PC-9 (cell line): ENCODE measurements at regions of chr6 and their contacts with region 1.

Region 1: GRCh38 chr6:70413114-70413991 is at the start of gene FAM135A:
- DNase-seq: peak; percentile 91 to 99
- H3K4me3 ChIP-seq: peak within 1 kb of the TSS; percentile 76
- H3K27ac ChIP-seq: peak within 1 kb of the TSS; percentile 43
- H3K4me1 ChIP-seq: peaks cover 31% of the 10 kb centered on the region
- H3K27me3 ChIP-seq: no peaks in the 10 kb centered on the region
- CTCF ChIP-seq: no peak
- total RNA-seq, gene FAM135A: 16.0 and 16.7 TPM in 2 replicates

Region 2: DNA sequence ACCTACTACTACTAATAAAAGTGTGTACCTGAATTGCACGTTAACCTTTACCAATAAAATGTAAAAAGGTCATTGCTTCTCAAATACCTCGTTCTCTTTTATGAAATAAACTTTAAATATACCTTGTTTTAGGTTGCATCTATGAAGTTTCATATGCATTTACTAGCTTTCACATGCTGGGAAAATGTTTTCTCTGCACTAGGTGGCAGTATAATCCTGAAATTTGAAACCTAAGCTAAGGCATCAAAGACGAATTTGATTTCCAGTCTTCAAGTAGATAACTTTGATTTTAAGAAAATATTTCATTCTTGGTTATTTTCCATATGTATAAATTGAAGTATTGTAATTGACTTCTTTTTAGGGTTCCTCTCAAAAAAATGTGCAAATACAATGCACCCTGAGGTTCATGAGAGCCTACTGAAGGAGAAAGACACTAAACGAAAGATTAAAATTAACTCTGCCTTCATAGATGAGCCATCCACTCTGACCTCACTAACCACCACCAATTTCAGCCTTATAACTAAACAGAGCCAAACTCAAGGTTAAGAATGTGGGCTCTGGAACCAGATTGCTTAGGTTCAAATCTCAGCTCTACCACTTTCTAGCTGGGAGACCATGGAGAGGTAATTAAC is 103.2 kb before region 1 on chr6:
- CTCF ChIA-PET with region 1: interaction called, 3 read pairs
- POLR2A ChIA-PET with region 1: no interaction called
- intact Hi-C with region 1: loop called (anchors 5 kb)
- DNase-seq: peak in 1 of 2 experiments; percentile 48
- H3K4me3 ChIP-seq: no peak overlapping the region
- H3K27ac ChIP-seq: no peak overlapping the region
- H3K4me1 ChIP-seq: no peaks in the 10 kb centered on the region
- H3K27me3 ChIP-seq: peaks cover 49% of the 10 kb centered on the region
- CTCF ChIP-seq: peak; percentile 78

Region 3: GRCh38 chr6:70375882-70376281 is 37.5 kb before region 1 on chr6:
- CTCF ChIA-PET with region 1: interaction called, 9 read pairs
- POLR2A ChIA-PET with region 1: no interaction called
- intact Hi-C with region 1: loop called (anchors 5 kb)
- DNase-seq: no peak
- H3K4me3 ChIP-seq: no peak overlapping the region
- H3K27ac ChIP-seq: no peak overlapping the region
- H3K4me1 ChIP-seq: peaks cover 5% of the 10 kb centered on the region; the same call in 1 of the 2 replicates
- H3K27me3 ChIP-seq: 0 out of 2 replicates have a peak, but pooled peaks cover 10% of the 10 kb centered on the region
- CTCF ChIP-seq: peak; percentile 44; the same call in 1 of the 2 replicates

Region 4: GRCh38 chr6:70398783-70399728 is 14.3 kb before region 1 on chr6:
- CTCF ChIA-PET with region 1: interaction called, 3 read pairs
- POLR2A ChIA-PET with region 1: interaction called, 33 read pairs
- intact Hi-C with region 1: loop called (anchors 1 kb)
- DNase-seq: peak; percentile 60 to 99
- H3K4me3 ChIP-seq: peak overlapping the region; percentile 43; the same call in 1 of the 2 replicates
- H3K27ac ChIP-seq: peak overlapping the region; percentile 85
- H3K4me1 ChIP-seq: peaks cover 47% of the 10 kb centered on the region
- H3K27me3 ChIP-seq: no peaks in the 10 kb centered on the region
- CTCF ChIP-seq: no peak

Region 5: DNA sequence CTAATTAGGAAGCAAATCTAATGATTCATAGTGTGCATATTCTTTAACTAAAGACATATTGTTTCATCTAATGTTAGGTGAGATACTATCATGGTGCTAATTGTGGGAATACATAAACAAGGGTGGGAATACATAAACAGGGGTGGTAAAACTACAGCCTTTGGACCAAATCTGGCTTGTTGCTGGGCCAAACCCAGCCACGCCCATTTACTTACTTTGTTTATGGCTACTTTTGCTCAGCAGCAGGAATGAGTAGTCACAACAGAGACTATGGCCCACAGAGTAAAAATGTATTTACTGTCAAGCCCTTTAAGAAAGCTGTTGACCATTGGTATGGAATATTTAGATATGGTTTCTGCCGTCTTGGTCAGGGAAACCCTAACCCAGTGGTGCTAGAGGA is 31.6 kb after region 1 on chr6:
- CTCF ChIA-PET with region 1: no interaction called
- POLR2A ChIA-PET with region 1: interaction called, 12 read pairs
- intact Hi-C with region 1: no loop called
- DNase-seq: no peak
- H3K4me3 ChIP-seq: no peak overlapping the region
- H3K27ac ChIP-seq: no peak overlapping the region
- H3K4me1 ChIP-seq: no peaks in the 10 kb centered on the region
- H3K27me3 ChIP-seq: no peaks in the 10 kb centered on the region
- CTCF ChIP-seq: no peak

Region 6: DNA sequence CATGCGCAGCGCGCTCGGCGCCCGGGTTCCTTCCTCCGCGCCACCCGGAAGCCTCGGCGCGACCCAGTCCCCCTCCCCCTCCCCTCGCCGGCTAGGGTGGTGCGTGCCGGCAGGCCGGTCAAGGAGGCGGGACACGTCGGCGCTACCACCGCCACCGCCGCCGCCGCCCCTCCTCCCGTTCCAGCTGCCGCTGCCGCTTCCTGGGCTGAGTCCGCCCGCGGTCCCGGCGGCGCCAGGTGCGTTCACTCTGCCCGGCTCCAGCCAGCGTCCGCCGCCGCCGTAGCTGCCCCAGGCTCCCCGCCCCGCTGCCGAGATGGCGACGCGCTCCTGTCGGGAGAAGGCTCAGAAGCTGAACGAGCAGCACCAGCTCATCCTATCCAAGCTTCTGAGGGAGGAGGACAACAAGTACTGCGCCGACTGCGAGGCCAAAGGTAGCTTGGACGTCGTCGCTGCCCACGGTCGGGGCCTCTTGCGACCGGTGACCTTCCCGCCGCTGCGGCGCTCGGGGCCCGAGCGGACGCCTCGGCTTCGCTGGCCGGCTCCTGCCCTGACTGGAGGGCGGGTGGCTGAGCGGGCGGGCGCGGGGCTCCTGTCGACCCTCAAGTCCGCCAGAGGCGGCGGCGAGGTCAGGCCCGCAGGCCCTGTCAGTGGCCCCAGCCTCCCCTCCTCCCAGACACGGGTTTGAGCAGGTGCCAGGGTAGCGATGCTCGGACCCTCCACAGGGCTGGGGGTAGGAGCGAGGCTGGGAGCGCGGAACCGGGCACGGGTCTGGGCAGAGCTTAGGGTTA is 254.6 kb after region 1 on chr6 and contains the start of gene SMAP1:
- CTCF ChIA-PET with region 1: no interaction called
- POLR2A ChIA-PET with region 1: interaction called, 9 read pairs
- intact Hi-C with region 1: loop called (anchors 5 kb)
- DNase-seq: peak; percentile 77 to 98
- H3K4me3 ChIP-seq: peak within 1 kb of the TSS; percentile 72
- H3K27ac ChIP-seq: peak within 1 kb of the TSS; percentile 71
- H3K4me1 ChIP-seq: peaks cover 22% of the 10 kb centered on the region
- H3K27me3 ChIP-seq: no peaks in the 10 kb centered on the region
- CTCF ChIP-seq: no peak
- total RNA-seq, gene SMAP1: 20.6 and 29.3 TPM in 2 replicates

Region 7: GRCh38 chr6:71367756-71368155 is 954.4 kb after region 1 on chr6:
- CTCF ChIA-PET with region 1: no interaction called
- POLR2A ChIA-PET with region 1: interaction called, 12 read pairs
- intact Hi-C with region 1: no loop called
- DNase-seq: no peak
- H3K4me3 ChIP-seq: no peak overlapping the region
- H3K27ac ChIP-seq: no peak overlapping the region
- H3K4me1 ChIP-seq: 0 out of 2 replicates have a peak, but pooled peaks cover 3% of the 10 kb centered on the region
- H3K27me3 ChIP-seq: no peaks in the 10 kb centered on the region
- CTCF ChIP-seq: no peak